Activated CD4-positive, alpha-beta T cell treated with anti-CD3 and anti-CD28 coated beads, Interleukin-2, amount 10 ng/mL, durations not matched to agents 24 days and 14 days (primary cell): ENCODE measurements at regions of chr7 and their contacts with region 1.

Region 1: GRCh38 chr7:64665980-64666662 is at the start of gene ZNF107:
- DNase-seq: peak; percentile 95
- H3K4me3 Mint-ChIP-seq: peak within 1 kb of the TSS; percentile 97
- H3K27ac Mint-ChIP-seq: peak within 1 kb of the TSS; percentile 97
- H3K4me1 Mint-ChIP-seq: peaks cover 17% of the 10 kb centered on the region
- H3K27me3 Mint-ChIP-seq: no peaks in the 10 kb centered on the region
- total RNA-seq, gene ZNF107: 13.0 and 13.3 TPM in 2 replicates

Region 2: GRCh38 chr7:63925623-63926460 is 740.3 kb before region 1 on chr7:
- intact Hi-C with region 1: loop called (anchors 10 kb)
- DNase-seq: peak; percentile 94
- H3K4me3 Mint-ChIP-seq: peak overlapping the region; percentile 87
- H3K27ac Mint-ChIP-seq: peak overlapping the region; percentile 87
- H3K4me1 Mint-ChIP-seq: peaks cover 1% of the 10 kb centered on the region
- H3K27me3 Mint-ChIP-seq: no peaks in the 10 kb centered on the region

Region 3: DNA sequence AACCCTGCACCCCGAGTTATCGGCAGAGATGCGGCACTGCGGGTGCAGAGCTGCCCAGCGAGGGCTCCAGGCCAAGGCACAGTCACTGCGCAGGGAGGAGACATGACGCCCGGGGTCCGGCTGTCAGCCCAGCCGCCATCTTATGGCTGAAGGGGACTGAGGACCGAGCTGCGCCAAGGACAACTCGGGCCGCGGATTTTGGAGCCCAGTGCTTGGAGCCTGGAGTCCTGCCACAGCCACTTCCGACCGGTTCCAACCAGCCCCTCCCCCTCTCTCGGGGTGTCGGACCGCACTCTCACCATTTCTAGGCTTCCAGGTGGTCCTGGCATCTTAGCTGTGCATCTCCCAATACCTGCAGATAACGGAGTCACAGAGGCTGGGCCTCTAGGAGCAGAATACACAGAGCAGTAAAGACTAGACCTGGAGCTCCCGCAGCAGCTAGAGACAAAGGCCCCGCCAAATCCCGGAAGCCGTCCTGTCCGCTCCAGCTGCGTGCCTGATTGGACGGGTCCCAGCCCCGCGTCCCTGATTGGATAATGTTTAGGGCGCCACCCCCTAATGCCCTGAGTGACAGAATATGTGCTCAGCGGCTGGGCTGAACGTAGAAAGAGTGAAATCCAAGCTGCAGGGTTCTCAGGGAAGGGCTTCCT is 103.4 kb before region 1 on chr7 and contains the start of gene ZNF680:
- intact Hi-C with region 1: loop called (anchors 1 kb)
- DNase-seq: peak; percentile 96
- H3K4me3 Mint-ChIP-seq: peak within 1 kb of the TSS; percentile 100
- H3K27ac Mint-ChIP-seq: peak within 1 kb of the TSS; percentile 98
- H3K4me1 Mint-ChIP-seq: peaks cover 2% of the 10 kb centered on the region
- H3K27me3 Mint-ChIP-seq: no peaks in the 10 kb centered on the region
- total RNA-seq, gene ZNF680: 10.4 and 10.7 TPM in 2 replicates

Region 4: DNA sequence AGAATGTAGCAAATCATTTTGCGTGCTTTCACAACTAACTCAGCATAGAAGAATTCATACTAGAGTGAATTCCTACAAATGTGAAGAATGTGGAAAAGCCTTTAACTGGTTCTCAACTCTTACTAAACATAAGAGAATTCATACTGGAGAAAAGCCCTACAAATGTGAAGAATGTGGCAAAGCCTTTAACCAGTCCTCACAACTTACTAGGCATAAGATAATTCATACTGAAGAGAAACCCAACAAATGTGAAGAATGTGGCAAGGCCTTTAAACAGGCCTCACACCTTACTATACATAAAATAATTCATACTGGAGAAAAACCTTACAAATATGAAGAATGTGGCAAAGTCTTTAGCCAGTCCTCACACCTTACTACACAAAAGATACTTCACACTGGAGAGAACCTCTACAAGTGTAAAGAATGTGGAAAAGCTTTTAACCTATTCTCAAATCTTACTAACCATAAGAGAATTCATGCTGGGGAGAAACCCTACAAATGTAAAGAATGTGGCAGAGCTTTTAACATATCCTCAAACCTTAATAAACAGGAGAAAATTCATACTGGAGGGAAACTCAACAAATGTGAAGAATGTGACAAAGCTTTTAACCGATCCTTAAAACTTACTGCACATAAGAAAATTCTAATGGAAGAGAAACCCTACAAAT is 40.6 kb after region 1 on chr7:
- intact Hi-C with region 1: no loop called
- DNase-seq: no peak
- H3K4me3 Mint-ChIP-seq: no peak overlapping the region
- H3K27ac Mint-ChIP-seq: no peak overlapping the region
- H3K4me1 Mint-ChIP-seq: no peaks in the 10 kb centered on the region
- H3K27me3 Mint-ChIP-seq: no peaks in the 10 kb centered on the region

Region 5: DNA sequence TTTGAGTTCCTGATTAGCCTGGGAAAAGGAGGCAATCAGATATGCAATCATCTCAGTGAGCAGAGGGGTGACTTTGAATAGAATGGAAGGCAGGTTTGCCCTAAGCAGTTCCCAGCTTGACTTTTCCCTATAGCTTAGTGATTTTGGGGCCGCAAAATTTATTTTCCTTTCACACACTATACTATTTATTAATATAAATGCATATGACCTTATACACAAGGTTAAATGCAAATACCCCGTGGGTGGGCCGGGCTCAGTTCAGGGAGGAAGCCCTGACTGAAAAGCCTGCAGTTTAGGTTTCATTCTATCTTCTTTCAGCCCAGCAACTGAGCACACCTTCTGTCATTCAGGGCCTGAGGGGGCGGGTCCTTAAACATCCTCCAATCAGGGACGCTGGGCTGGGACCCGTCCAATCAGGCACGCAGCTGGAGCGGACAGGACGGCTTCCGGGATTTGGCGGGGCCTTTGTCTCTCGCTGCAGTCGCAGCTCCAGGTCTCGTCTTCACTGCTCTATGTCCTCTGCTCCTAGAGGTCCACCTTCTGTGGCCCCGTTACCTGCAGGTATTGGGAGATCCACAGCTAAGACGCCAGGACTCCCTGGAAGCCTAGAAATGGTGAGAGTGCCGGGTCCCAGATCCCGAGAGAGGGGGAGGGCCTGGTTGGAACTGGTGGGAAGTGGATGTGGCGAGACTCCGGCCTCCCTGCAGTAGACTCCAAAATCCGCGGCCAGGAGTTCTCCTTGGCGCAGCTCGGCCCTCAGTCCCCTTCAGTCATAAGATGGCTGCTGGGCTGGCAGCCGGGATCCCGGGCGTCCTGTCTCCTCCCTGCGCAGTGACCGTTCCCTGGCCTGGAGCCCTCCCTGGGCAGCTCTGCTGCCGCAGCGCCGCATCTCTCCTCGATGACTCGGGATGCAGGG is 236.9 kb after region 1 on chr7 and contains the start of gene ZNF273:
- intact Hi-C with region 1: loop called (anchors 2 kb)
- DNase-seq: peak; percentile 97
- H3K4me3 Mint-ChIP-seq: peak within 1 kb of the TSS; percentile 98
- H3K27ac Mint-ChIP-seq: peak within 1 kb of the TSS; percentile 97
- H3K4me1 Mint-ChIP-seq: peaks cover 24% of the 10 kb centered on the region
- H3K27me3 Mint-ChIP-seq: no peaks in the 10 kb centered on the region
- total RNA-seq, gene ZNF273: 8.7 and 9.4 TPM in 2 replicates

Region 6: DNA sequence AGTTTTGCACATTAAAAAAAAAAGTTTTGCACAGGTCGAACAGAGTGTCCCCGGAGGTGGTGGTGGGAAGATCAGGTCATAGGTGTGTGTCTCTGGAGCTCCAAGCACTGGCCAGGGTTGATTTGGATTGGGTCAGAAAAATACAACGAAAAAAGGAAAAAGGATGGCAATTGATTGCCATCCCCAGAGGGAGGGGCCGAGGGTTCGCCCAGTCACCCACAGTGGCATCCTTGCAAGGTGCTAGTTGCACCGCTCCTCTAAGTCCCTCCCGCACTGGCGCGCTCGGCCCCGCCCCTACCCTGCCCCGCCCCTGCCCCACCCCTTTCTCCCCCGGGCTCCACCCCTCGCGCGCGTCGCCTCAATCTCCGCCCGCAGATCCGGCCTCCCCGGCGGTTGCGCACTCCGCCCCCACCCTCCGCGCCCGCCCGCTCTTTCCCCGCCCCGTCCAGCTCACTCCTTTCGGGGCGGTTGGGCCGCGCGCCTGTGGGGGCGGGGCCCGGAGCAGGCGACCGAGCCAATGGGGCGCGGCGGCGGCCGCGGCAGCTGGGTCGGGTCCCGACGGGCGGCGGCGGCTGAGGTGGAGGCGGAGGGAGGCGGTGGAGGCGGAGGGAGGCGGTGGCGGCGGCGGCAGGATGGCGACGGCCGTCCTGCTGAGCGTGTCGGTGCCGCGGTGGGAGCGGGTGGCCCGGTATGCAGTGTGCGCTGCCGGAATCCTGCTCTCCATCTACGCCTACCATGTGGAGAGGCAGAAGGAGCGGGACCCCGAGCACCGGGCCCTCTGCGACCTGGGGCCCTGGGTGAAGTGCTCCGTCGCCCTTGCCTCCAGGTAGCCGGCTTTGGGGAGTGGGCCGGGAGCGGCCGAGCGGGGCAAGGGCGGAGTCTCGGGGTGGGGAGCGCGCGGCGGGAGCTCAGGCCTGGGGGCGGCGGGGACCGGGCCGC is 371.9 kb after region 1 on chr7:
- intact Hi-C with region 1: loop called (anchors 2 kb)
- DNase-seq: peak; percentile 96
- H3K4me3 Mint-ChIP-seq: peak overlapping the region; percentile 82
- H3K27ac Mint-ChIP-seq: peak overlapping the region; percentile 86
- H3K4me1 Mint-ChIP-seq: peaks cover 11% of the 10 kb centered on the region
- H3K27me3 Mint-ChIP-seq: no peaks in the 10 kb centered on the region